ENCODE measurements at regions of chr11 and their contacts with region 1.

Region 1: DNA sequence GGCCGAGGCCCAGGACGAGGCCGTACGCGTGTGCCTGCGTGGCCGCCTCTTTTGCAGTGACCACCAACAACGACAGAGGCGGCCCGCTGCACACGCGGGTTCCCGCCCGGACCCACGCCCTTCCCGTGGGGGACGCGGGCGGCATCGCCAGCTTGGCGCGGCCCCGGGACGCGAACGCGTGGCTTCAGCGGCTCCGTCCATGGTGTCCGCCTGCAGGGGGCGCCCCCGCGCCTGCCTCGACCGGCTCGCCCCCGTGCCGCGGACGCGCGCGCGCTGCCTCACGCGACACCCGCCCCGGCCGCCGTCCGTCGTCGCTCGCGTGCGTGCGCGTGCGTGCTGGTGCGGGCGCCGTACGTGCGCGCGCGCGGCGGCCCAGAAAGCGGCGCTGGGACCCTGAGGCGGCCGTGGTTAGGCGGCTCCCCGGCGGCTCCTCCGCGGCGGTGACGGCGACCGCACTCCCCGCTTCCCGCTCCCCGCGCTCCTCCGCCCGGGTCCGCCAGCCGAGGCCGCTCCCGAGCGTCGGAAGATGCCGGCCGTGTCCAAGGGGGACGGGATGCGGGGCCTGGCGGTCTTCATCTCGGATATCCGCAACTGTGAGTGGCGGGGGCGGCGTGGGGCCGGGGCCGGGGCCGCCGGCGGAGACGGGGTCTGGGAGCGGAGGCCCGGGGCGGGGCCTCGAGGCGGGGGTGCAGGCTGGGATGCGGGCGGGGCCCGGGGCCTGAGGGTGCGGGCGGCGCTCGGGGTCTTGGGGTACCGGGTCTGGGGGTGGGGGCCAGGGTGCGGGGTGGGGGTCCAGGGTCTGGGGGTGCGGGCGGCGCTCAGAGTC is at the start of gene AP2A2:
- DNase-seq: peak; percentile 80 to 98 (median 87)
- ATAC-seq: peak; percentile 76 to 86 (median 81)
- H3K4me3 ChIP-seq: peak within 1 kb of the TSS; percentile 60 to 62
- H3K4me3 Mint-ChIP-seq: peak within 1 kb of the TSS; percentile 84
- H3K27ac ChIP-seq: peak within 1 kb of the TSS; percentile 53
- H3K27ac Mint-ChIP-seq: peak within 1 kb of the TSS; percentile 84 to 89
- H3K4me1 ChIP-seq: peaks cover 27 to 41% of the 10 kb centered on the region in 2 experiments
- H3K4me1 Mint-ChIP-seq: peaks cover 33 to 40% (median 33%) of the 10 kb centered on the region in 3 donors
- H3K27me3 ChIP-seq: no peaks in the 10 kb centered on the region
- H3K27me3 Mint-ChIP-seq: no peaks in the 10 kb centered on the region
- total RNA-seq, gene AP2A2: 59.6 to 85.3 (median 70.8) TPM

Region 2: GRCh38 chr11:986294-986959 is 60.7 kb after region 1 on chr11:
- CTCF ChIA-PET with region 1: no interaction called
- POLR2A ChIA-PET with region 1: no interaction called
- DNase-seq: no peak
- ATAC-seq: no peak
- H3K4me3 ChIP-seq: no peak overlapping the region
- H3K4me3 Mint-ChIP-seq: no peak overlapping the region
- H3K27ac ChIP-seq: no peak overlapping the region
- H3K27ac Mint-ChIP-seq: no peak overlapping the region
- H3K4me1 ChIP-seq: no peaks in the 10 kb centered on the region
- H3K4me1 Mint-ChIP-seq: peaks cover 0 to 3% (median 0%) of the 10 kb centered on the region in 3 donors
- H3K27me3 ChIP-seq: no peaks in the 10 kb centered on the region
- H3K27me3 Mint-ChIP-seq: no peaks in the 10 kb centered on the region

Region 3: DNA sequence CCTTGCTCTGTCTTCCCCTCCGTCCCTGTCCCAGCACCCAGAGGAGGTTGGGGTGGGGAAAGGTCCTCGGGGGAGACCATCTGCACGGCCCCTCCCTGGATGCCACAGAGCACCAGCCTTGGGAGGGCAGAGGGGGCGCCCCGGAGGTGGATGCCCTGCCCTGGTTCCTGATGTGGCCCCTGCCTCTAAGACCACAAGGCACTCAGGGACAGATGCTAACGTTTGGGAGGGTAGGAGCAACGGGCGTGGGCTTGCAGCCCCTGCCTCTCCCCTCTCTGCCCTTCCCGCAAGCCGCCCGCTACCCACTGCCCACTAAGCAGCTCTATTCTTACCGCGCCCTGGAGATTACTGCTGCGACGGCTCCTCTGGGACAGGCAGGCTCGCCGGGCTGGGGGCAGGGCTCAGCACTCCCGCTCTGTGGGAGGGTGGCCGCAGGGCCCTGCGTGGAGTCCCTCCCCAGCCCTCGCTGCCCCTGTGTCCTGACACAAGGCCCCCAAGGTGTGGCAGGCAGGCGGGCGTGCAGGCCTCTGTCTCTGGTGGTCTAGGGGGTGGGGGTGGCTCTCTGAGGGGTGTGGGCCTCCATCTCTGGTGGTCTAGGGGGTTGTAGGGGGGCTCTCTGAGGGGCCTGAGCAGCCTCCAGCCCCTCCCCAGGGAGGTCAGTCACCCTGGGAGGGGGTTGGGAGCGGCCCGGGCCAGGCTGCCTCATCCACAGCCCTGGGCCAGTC is 478.9 kb after region 1 on chr11:
- CTCF ChIA-PET with region 1: interaction called in 1 of 2 experiments, 11 read pairs
- POLR2A ChIA-PET with region 1: no interaction called
- DNase-seq: no peak
- ATAC-seq: no peak
- H3K4me3 ChIP-seq: no peak overlapping the region
- H3K4me3 Mint-ChIP-seq: no peak overlapping the region
- H3K27ac ChIP-seq: no peak overlapping the region
- H3K27ac Mint-ChIP-seq: no peak overlapping the region
- H3K4me1 ChIP-seq: no peaks in the 10 kb centered on the region
- H3K4me1 Mint-ChIP-seq: no peaks in the 10 kb centered on the region
- H3K27me3 ChIP-seq: peaks cover 0 to 39% of the 10 kb centered on the region in 2 experiments
- H3K27me3 Mint-ChIP-seq: peaks cover 0 to 9% of the 10 kb centered on the region in 2 donors

Measured in T-cell (primary cell).